ENCODE measurements at regions of chr2 and their contacts with region 1.

Region 1: GRCh38 chr2:191617575-191617974 is 60.4 kb upstream of the NABP1 start:
- DNase-seq: peak in 13 of 14 experiments; percentile 10 to 93 (median 38)
- ATAC-seq: peak; percentile 94
- H3K4me3 ChIP-seq: no peak overlapping the region
- H3K4me3 Mint-ChIP-seq: peak overlapping the region; percentile 3
- H3K27ac ChIP-seq: peak overlapping the region; percentile 85 to 90
- H3K27ac Mint-ChIP-seq: peak overlapping the region; percentile 73
- H3K4me1 ChIP-seq: peaks cover 31% of the 10 kb centered on the region
- H3K4me1 Mint-ChIP-seq: peaks cover 50% of the 10 kb centered on the region
- H3K27me3 ChIP-seq: no peaks in the 10 kb centered on the region
- H3K27me3 Mint-ChIP-seq: no peaks in the 10 kb centered on the region
- CTCF ChIP-seq: no peak

Region 2: DNA sequence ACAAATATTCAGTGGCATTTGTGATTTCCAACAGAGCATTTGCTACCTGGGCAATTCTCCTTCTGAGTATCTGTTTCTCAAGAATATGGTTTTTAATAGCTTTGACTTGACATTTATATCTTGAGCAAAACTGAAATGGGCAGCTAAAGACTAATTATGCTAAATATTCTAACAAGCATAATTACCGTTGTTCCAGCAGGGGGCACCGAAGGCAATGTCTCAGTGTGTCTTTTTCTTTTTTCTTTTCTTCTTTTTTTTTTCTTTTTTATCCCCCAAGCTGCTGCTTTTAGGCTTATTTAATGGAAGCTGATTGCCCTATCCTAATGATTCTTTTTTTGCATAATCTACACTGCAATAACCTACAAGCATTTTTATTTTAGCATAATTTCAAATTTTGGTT is 78.5 kb before region 1 on chr2:
- CTCF ChIA-PET with region 1: no interaction called
- POLR2A ChIA-PET with region 1: no interaction called
- intact Hi-C with region 1: no loop called
- DNase-seq: peak in 6 of 14 experiments; percentile 11 to 38 (median 18)
- ATAC-seq: no peak
- H3K4me3 ChIP-seq: no peak overlapping the region
- H3K4me3 Mint-ChIP-seq: no peak overlapping the region
- H3K27ac ChIP-seq: no peak overlapping the region
- H3K27ac Mint-ChIP-seq: no peak overlapping the region
- H3K4me1 ChIP-seq: no peaks in the 10 kb centered on the region
- H3K4me1 Mint-ChIP-seq: no peaks in the 10 kb centered on the region
- H3K27me3 ChIP-seq: no peaks in the 10 kb centered on the region
- H3K27me3 Mint-ChIP-seq: no peaks in the 10 kb centered on the region
- CTCF ChIP-seq: peak; percentile 46

Region 3: GRCh38 chr2:191566344-191566743 is 51.2 kb before region 1 on chr2:
- CTCF ChIA-PET with region 1: interaction called, 9 read pairs
- POLR2A ChIA-PET with region 1: no interaction called
- intact Hi-C with region 1: loop called in 1 of 2 experiments (anchors 5 kb)
- DNase-seq: peak; percentile 49 to 83 (median 60)
- ATAC-seq: peak; percentile 54
- H3K4me3 ChIP-seq: no peak overlapping the region
- H3K4me3 Mint-ChIP-seq: no peak overlapping the region
- H3K27ac ChIP-seq: no peak overlapping the region
- H3K27ac Mint-ChIP-seq: no peak overlapping the region
- H3K4me1 ChIP-seq: peaks cover 8% of the 10 kb centered on the region
- H3K4me1 Mint-ChIP-seq: peaks cover 18% of the 10 kb centered on the region
- H3K27me3 ChIP-seq: no peaks in the 10 kb centered on the region
- H3K27me3 Mint-ChIP-seq: peaks cover 12% of the 10 kb centered on the region
- CTCF ChIP-seq: peak; percentile 84

Region 4: GRCh38 chr2:191631754-191632153 is 14.2 kb after region 1 on chr2:
- CTCF ChIA-PET with region 1: interaction called, 4 read pairs
- POLR2A ChIA-PET with region 1: interaction called, 44 read pairs
- intact Hi-C with region 1: no loop called
- DNase-seq: no peak
- ATAC-seq: no peak
- H3K4me3 ChIP-seq: no peak overlapping the region
- H3K4me3 Mint-ChIP-seq: no peak overlapping the region
- H3K27ac ChIP-seq: no peak overlapping the region
- H3K27ac Mint-ChIP-seq: no peak overlapping the region
- H3K4me1 ChIP-seq: peaks cover 14% of the 10 kb centered on the region
- H3K4me1 Mint-ChIP-seq: peaks cover 55% of the 10 kb centered on the region
- H3K27me3 ChIP-seq: no peaks in the 10 kb centered on the region
- H3K27me3 Mint-ChIP-seq: no peaks in the 10 kb centered on the region
- CTCF ChIP-seq: no peak

Region 5: GRCh38 chr2:191637182-191638078 is 19.9 kb after region 1 on chr2:
- CTCF ChIA-PET with region 1: interaction called, 4 read pairs
- POLR2A ChIA-PET with region 1: interaction called, 44 read pairs
- intact Hi-C with region 1: no loop called
- DNase-seq: peak in 4 of 14 experiments; percentile 35 to 70 (median 68)
- ATAC-seq: peak; percentile 97
- H3K4me3 ChIP-seq: no peak overlapping the region
- H3K4me3 Mint-ChIP-seq: peak overlapping the region; percentile 8
- H3K27ac ChIP-seq: peak overlapping the region in 1 of 2 donors; percentile 42
- H3K27ac Mint-ChIP-seq: peak overlapping the region; percentile 81
- H3K4me1 ChIP-seq: peaks cover 23% of the 10 kb centered on the region
- H3K4me1 Mint-ChIP-seq: peaks cover 63% of the 10 kb centered on the region
- H3K27me3 ChIP-seq: no peaks in the 10 kb centered on the region
- H3K27me3 Mint-ChIP-seq: no peaks in the 10 kb centered on the region
- CTCF ChIP-seq: no peak

Measured in CD4-positive, alpha-beta T cell (primary cell).